ENCODE measurements at regions of chr21 and their contacts with region 1.

Region 1: DNA sequence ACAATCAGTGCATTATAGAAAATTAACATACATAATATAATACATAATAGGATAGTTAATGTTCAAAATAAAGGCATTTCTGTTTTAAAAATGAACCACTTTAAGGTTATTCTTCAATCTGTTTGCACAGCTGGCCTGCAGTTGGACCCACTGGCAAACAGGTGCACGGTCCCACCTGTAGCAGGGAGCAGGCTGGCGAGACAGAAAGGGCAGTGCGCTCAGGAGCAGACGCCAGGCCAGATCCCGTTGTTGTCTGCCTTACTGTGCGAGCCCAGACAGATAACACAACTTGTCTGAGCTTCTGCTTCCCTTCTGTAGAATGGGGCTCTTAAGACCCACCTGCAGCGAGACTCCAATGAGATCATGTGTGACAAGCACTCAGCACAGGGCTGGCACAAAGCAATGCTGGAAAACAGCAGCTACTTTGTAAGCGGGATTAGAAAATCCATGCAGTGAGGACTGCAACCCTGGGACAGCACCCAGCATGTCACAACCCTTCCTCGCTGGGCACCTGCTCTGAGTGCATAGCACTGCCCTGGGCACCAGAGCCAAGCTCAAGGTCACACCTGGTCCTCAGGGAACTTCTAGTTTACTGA is 33.5 kb downstream of the VPS26C start:
- DNase-seq: no peak
- ATAC-seq: no peak
- H3K4me3 ChIP-seq: no peak overlapping the region
- H3K4me3 Mint-ChIP-seq: no peak overlapping the region
- H3K27ac ChIP-seq: no peak overlapping the region
- H3K27ac Mint-ChIP-seq: no peak overlapping the region
- H3K4me1 ChIP-seq: peaks cover 3 to 9% of the 10 kb centered on the region in 2 experiments
- H3K4me1 Mint-ChIP-seq: peaks cover 15 to 19% (median 19%) of the 10 kb centered on the region in 3 donors
- H3K27me3 ChIP-seq: no peaks in the 10 kb centered on the region
- H3K27me3 Mint-ChIP-seq: no peaks in the 10 kb centered on the region

Region 2: GRCh38 chr21:37383086-37383485 is 149.4 kb after region 1 on chr21:
- CTCF ChIA-PET with region 1: no interaction called
- POLR2A ChIA-PET with region 1: interaction called in 1 of 2 experiments, 10 read pairs
- DNase-seq: no peak
- ATAC-seq: no peak
- H3K4me3 ChIP-seq: no peak overlapping the region
- H3K4me3 Mint-ChIP-seq: peak overlapping the region in 1 of 3 donors; percentile 37
- H3K27ac ChIP-seq: no peak overlapping the region
- H3K27ac Mint-ChIP-seq: no peak overlapping the region
- H3K4me1 ChIP-seq: peaks cover 46 to 48% of the 10 kb centered on the region in 2 experiments
- H3K4me1 Mint-ChIP-seq: peaks cover 88 to 93% (median 93%) of the 10 kb centered on the region in 3 donors
- H3K27me3 ChIP-seq: no peaks in the 10 kb centered on the region
- H3K27me3 Mint-ChIP-seq: no peaks in the 10 kb centered on the region

Region 3: GRCh38 chr21:37419228-37419906 is 185.7 kb after region 1 on chr21:
- CTCF ChIA-PET with region 1: no interaction called
- POLR2A ChIA-PET with region 1: interaction called in 1 of 2 experiments, 13 read pairs
- DNase-seq: no peak
- ATAC-seq: no peak
- H3K4me3 ChIP-seq: no peak overlapping the region
- H3K4me3 Mint-ChIP-seq: peak overlapping the region in 2 of 3 donors; percentile 12 to 39
- H3K27ac ChIP-seq: peak overlapping the region; percentile 24
- H3K27ac Mint-ChIP-seq: peak overlapping the region; percentile 84 to 91
- H3K4me1 ChIP-seq: peaks cover 12 to 31% of the 10 kb centered on the region in 2 experiments
- H3K4me1 Mint-ChIP-seq: peaks cover 85 to 87% (median 85%) of the 10 kb centered on the region in 3 donors
- H3K27me3 ChIP-seq: no peaks in the 10 kb centered on the region
- H3K27me3 Mint-ChIP-seq: no peaks in the 10 kb centered on the region

Measured in T-cell (primary cell).